Activated B cell treated with CpG ODN at 0.5 μM for 24 hours (primary cell): ENCODE measurements at regions of chr13 and their contacts with region 1.

Region 1: DNA sequence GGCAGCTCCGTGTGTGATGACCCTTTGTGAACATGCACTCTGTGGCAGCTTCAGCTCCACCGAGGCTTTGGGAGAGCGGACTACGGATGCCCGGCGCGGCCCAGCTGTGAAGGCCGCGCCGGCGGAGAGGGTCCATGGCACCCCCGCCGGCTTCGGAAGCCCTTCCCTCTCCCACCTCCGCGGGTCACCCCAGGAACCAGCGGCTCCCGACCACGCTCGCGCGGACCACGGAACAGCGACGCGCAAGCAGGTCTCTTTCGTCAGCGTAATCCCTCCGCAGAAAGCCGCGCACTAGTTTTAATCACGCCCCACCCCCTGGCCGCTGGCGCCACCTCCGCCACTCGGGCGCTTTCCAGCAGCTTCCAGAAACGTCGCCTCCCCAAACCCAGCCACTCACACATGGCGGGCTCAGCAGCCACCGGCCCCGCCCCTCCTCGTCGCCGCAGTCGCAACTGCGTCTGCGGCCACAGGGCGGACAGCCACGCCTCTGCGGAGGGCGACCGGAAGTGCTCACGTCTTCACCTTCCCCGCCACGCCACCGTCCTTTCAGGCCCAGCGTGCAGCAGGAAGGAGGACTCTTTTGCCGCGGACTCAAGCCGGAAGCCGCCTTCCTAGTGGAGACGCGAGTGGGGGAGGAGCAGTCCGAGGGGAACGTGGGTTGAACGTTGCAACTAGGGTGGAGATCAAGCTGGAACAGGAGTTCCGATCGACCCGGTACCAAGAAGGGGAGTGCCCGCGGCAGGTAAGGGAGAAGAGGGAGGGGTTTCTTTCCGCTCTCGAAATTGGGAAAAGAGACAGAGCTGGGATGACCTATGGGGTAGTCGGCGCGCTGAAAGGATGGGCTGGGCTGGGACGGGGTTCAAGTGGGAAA is at the start of gene USPL1:
- DNase-seq: peak; percentile 98
- ATAC-seq: peak; percentile 84
- H3K4me3 Mint-ChIP-seq: no peak within 1 kb of the TSS
- H3K27ac Mint-ChIP-seq: no peak within 1 kb of the TSS
- H3K4me1 Mint-ChIP-seq: peaks cover 37% of the 10 kb centered on the region
- H3K27me3 Mint-ChIP-seq: no peaks in the 10 kb centered on the region
- CTCF ChIP-seq: no peak
- total RNA-seq, gene USPL1: 29.1 and 33.6 TPM in 2 replicates

Region 2: DNA sequence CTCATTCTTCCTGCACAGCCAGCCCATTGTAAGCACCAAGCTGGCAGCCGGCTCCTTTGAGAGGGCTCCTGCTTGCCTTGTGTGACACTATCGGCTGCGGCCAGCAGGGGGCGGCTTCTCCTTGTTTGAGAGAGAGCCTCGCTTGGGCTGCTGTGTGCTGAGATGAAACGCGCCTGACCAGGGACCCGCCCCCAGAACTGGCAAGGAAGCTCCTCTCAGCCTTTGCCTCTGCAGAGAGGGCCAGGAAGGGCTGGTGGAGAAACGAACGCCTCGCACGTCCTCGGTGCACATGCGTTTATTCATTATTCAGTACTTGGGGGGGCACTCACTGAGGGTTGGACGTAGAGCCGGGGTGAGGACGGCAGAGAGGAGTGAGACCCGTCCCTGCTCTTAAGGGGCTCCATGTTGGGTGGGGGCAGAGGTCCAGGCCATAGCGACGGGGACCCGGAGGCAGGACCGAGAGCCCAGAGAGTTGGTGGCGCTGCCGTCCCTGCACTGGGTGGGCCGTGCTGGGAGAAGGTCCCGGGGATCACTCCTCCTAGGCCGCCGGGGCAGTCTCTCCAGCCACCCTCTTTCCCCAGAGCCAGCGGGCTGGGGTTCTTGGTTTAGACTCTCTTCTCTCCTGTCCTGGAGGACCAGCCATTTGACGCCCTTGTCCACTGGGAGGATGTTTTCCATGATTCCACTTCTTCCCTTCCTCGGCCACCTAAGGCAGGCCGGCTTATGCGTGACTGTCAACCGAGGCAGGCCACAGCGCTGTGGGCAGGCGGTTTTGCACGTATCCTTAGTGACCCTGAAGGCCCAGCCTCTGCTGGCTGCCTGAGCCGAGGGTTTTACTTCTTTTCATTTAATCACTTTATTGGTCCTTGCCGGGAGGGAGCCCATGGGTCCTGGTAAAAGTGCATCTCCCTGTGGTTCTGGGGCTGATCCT is 484.7 kb before region 1 on chr13:
- CTCF ChIA-PET with region 1: interaction called, 8 read pairs
- POLR2A ChIA-PET with region 1: interaction called, 4 read pairs
- intact Hi-C with region 1: loop called (anchors 2 kb)
- DNase-seq: peak; percentile 90
- ATAC-seq: peak; percentile 100
- H3K4me3 Mint-ChIP-seq: no peak overlapping the region
- H3K27ac Mint-ChIP-seq: no peak overlapping the region
- H3K4me1 Mint-ChIP-seq: peaks cover 3% of the 10 kb centered on the region
- H3K27me3 Mint-ChIP-seq: no peaks in the 10 kb centered on the region
- CTCF ChIP-seq: peak; percentile 69

Region 3: DNA sequence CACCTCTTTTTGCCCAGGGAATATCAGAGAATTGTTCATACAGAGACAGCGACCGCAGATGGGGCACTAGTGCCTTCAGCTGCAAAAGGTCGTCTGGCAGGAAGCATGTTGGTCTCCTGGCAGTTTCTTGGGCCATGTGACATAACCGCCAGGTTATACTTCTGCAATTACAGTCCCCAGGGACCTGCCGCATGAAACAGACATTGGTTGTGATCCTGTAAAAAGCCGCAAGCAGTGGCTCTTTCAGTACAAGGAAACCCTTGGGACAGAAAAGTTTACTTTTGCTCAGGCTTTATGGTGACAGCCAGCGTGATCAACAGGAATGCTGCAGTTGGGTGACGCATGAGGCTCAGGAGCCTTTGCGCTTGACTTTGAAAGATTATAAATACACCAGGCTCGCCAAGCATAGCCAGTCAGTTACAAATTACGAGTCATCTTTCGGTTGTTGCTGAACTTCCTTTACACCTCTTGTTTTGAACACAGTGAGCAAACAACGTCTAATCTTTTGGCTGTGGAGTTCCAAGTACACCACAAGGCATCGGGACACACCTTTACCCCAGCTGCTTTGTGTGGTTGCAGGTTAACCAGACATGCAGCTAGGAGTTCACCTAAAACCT is 245.8 kb before region 1 on chr13:
- CTCF ChIA-PET with region 1: no interaction called
- POLR2A ChIA-PET with region 1: interaction called, 31 read pairs
- intact Hi-C with region 1: loop called (anchors 1 kb)
- DNase-seq: peak; percentile 68
- ATAC-seq: peak; percentile 78
- H3K4me3 Mint-ChIP-seq: peak overlapping the region; percentile 78
- H3K27ac Mint-ChIP-seq: peak overlapping the region; percentile 84
- H3K4me1 Mint-ChIP-seq: peaks cover 85% of the 10 kb centered on the region
- H3K27me3 Mint-ChIP-seq: no peaks in the 10 kb centered on the region
- CTCF ChIP-seq: no peak

Region 4: DNA sequence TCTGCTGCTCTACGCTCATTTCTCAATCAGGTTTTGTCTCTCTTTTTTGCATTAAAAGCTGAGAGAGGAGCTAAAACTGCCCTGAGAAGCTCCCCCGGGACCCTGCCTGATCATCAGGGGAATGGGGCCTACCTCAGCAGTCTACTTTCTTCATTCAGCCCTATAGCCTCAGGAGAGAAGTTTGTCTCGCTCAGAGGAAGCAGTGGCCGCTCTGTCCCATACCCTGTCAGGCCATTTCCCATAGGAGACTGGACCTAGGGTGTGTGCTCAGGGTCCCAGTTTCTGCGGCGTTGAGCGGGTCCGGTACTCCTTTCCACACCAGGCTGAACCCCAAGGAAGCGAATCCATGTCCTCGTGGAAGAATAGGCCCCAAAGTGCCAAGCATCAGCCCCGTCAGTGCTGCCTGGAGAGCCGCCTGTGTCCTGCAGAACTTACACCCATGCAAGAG is 173.6 kb before region 1 on chr13:
- CTCF ChIA-PET with region 1: no interaction called
- POLR2A ChIA-PET with region 1: interaction called, 17 read pairs
- intact Hi-C with region 1: no loop called
- DNase-seq: peak; percentile 76
- ATAC-seq: peak; percentile 88
- H3K4me3 Mint-ChIP-seq: peak overlapping the region; percentile 79
- H3K27ac Mint-ChIP-seq: peak overlapping the region; percentile 97
- H3K4me1 Mint-ChIP-seq: peaks cover 72% of the 10 kb centered on the region
- H3K27me3 Mint-ChIP-seq: no peaks in the 10 kb centered on the region
- CTCF ChIP-seq: no peak

Region 5: GRCh38 chr13:30629527-30629926 is 12.0 kb after region 1 on chr13:
- CTCF ChIA-PET with region 1: no interaction called
- POLR2A ChIA-PET with region 1: interaction called, 40 read pairs
- intact Hi-C with region 1: loop called (anchors 1 kb)
- DNase-seq: no peak
- ATAC-seq: no peak
- H3K4me3 Mint-ChIP-seq: no peak overlapping the region
- H3K27ac Mint-ChIP-seq: peak overlapping the region; percentile 18
- H3K4me1 Mint-ChIP-seq: peaks cover 45% of the 10 kb centered on the region
- H3K27me3 Mint-ChIP-seq: no peaks in the 10 kb centered on the region
- CTCF ChIP-seq: no peak

Region 6: GRCh38 chr13:30673669-30674521 is 56.3 kb after region 1 on chr13:
- CTCF ChIA-PET with region 1: no interaction called
- POLR2A ChIA-PET with region 1: interaction called, 10 read pairs
- intact Hi-C with region 1: loop called (anchors 1 kb)
- DNase-seq: peak; percentile 94
- ATAC-seq: peak; percentile 93
- H3K4me3 Mint-ChIP-seq: peak overlapping the region; percentile 92
- H3K27ac Mint-ChIP-seq: peak overlapping the region; percentile 92
- H3K4me1 Mint-ChIP-seq: peaks cover 29% of the 10 kb centered on the region
- H3K27me3 Mint-ChIP-seq: no peaks in the 10 kb centered on the region
- CTCF ChIP-seq: no peak

Region 7: GRCh38 chr13:31161828-31162590 is 544.5 kb after region 1 on chr13 and contains the start of gene HSPH1:
- CTCF ChIA-PET with region 1: no interaction called
- POLR2A ChIA-PET with region 1: interaction called, 3 read pairs
- intact Hi-C with region 1: loop called (anchors 2 kb)
- DNase-seq: peak; percentile 99
- ATAC-seq: peak; percentile 85
- H3K4me3 Mint-ChIP-seq: peak within 1 kb of the TSS; percentile 97
- H3K27ac Mint-ChIP-seq: peak within 1 kb of the TSS; percentile 95
- H3K4me1 Mint-ChIP-seq: peaks cover 36% of the 10 kb centered on the region
- H3K27me3 Mint-ChIP-seq: no peaks in the 10 kb centered on the region
- CTCF ChIP-seq: no peak
- total RNA-seq, gene HSPH1: 107 and 112 TPM in 2 replicates